H1 (cell line): ENCODE measurements at regions of chr3 and their contacts with region 1.

Region 1: GRCh38 chr3:32374788-32375595 is 16.7 kb upstream of the CMTM7 start:
- DNase-seq: peak in 1 of 2 experiments; percentile 82
- H3K4me3 ChIP-seq: no peak overlapping the region
- H3K27ac ChIP-seq: no peak overlapping the region
- H3K4me1 ChIP-seq: no peaks in the 10 kb centered on the region
- H3K27me3 ChIP-seq: no peaks in the 10 kb centered on the region
- CTCF ChIP-seq: peak in 2 of 3 experiments; percentile 64 to 72; a peak in 3 of 4 replicates
- EP300 ChIP-seq: no peak
- POLR2A ChIP-seq: no peak
- RAD21 ChIP-seq: peak; percentile 57 to 71

Region 2: DNA sequence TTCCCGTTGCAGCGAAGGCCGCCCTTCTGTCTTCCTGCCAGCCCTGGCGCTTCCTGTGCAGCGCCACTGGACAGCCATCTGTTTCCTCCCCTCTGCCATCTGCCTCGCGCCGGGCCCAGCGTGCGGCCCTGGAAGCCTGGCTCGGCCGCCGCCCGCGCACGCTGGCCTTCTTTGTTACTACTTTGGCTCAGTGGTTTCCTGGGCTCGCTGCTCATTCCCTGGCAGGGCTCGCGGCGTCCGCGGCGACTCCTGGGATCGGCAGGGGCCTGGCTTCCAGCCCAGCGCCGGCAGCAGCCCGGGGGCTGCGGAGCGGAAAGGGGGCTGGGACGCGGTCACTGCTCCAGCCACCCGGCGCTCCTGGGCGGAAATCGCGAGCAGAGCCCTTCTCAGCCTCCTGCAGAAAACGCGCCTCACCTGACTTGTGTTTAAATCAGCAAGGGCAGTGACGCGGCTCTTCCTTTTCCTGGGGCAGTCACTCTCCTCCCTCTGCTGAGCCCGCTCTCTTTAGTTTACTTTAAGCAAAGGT is 26.6 kb after region 1 on chr3:
- CTCF ChIA-PET with region 1: interaction called, 121 read pairs
- POLR2A ChIA-PET with region 1: interaction called, 3 read pairs
- DNase-seq: peak in 1 of 2 experiments; percentile 80
- H3K4me3 ChIP-seq: peak overlapping the region; percentile 19 to 51 (median 34)
- H3K27ac ChIP-seq: peak overlapping the region; percentile 49; the same call in 1 of the 2 replicates
- H3K4me1 ChIP-seq: peaks cover 2 to 5% (median 4%) of the 10 kb centered on the region in 4 experiments; a peak in 6 of 7 replicates
- H3K27me3 ChIP-seq: no peaks in the 10 kb centered on the region
- CTCF ChIP-seq: no peak
- EP300 ChIP-seq: no peak
- POLR2A ChIP-seq: peak in 1 of 2 experiments; percentile 81; a peak in 2 of 3 replicates
- RAD21 ChIP-seq: no peak; a peak in 1 of 4 replicates

Region 3: GRCh38 chr3:32410367-32411246 is 35.6 kb after region 1 on chr3:
- CTCF ChIA-PET with region 1: interaction called, 16 read pairs
- POLR2A ChIA-PET with region 1: interaction called, 3 read pairs
- DNase-seq: no peak
- H3K4me3 ChIP-seq: no peak overlapping the region
- H3K27ac ChIP-seq: no peak overlapping the region
- H3K4me1 ChIP-seq: peaks cover 5 to 37% (median 21%) of the 10 kb centered on the region in 4 experiments; a peak in 6 of 7 replicates
- H3K27me3 ChIP-seq: no peaks in the 10 kb centered on the region
- CTCF ChIP-seq: no peak
- EP300 ChIP-seq: no peak
- POLR2A ChIP-seq: no peak
- RAD21 ChIP-seq: no peak

Region 4: DNA sequence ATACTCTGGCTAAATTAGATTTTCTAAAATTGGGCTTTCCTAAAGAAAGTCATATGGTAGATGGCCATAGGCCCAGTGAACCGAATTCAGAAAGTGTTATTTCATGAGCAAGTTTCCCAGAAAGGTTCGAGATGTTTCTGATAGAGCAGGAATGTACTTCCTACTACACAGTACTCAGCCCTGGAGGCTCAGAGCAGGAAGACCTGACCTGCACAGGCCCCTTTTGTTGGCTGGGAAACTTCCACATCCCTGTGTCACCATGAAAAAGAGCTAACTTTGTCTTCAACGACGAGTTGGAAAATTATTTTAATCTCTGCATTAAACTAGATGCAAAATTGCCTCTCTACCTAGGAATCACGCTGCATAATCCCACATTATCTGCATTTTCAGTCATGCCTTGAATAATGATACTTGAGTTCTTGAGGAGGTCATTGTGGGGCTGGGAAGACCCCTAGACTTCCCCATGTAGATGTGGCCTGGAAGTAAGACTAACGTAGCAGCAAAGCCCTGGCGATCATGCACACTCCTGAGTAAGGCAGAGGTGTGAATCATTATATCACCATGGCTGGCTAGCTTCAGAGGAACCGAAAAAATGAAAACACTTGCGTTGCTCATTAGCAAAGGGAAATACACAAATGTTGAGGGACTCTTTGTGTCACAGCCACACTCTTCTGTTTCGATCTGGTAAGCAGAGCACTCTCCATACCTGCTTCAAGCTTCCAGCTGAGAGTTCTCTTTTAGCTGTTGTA is 63.8 kb after region 1 on chr3:
- CTCF ChIA-PET with region 1: interaction called, 13 read pairs
- POLR2A ChIA-PET with region 1: no interaction called
- DNase-seq: peak in 1 of 2 experiments; percentile 36
- H3K4me3 ChIP-seq: no peak overlapping the region
- H3K27ac ChIP-seq: no peak overlapping the region
- H3K4me1 ChIP-seq: peaks cover 0 to 5% (median 1%) of the 10 kb centered on the region in 4 experiments; a peak in 2 of 7 replicates
- H3K27me3 ChIP-seq: no peaks in the 10 kb centered on the region
- CTCF ChIP-seq: no peak
- EP300 ChIP-seq: no peak
- POLR2A ChIP-seq: no peak
- RAD21 ChIP-seq: no peak

Region 5: GRCh38 chr3:32453346-32453745 is 78.4 kb after region 1 on chr3:
- CTCF ChIA-PET with region 1: interaction called, 23 read pairs
- POLR2A ChIA-PET with region 1: no interaction called
- DNase-seq: no peak
- H3K4me3 ChIP-seq: no peak overlapping the region
- H3K27ac ChIP-seq: no peak overlapping the region
- H3K4me1 ChIP-seq: peaks cover 0 to 13% (median 8%) of the 10 kb centered on the region in 4 experiments; a peak in 4 of 7 replicates
- H3K27me3 ChIP-seq: no peaks in the 10 kb centered on the region
- CTCF ChIP-seq: no peak
- EP300 ChIP-seq: no peak
- POLR2A ChIP-seq: no peak
- RAD21 ChIP-seq: no peak